AG04450 (cell line): ENCODE measurements at regions of chr10 and their contacts with region 1.

Region 1: GRCh38 chr10:21269289-21269688 is 256.2 kb downstream of the SKIDA1 start:
- DNase-seq: no peak
- H3K4me3 ChIP-seq: no peak overlapping the region
- H3K27ac ChIP-seq: no peak overlapping the region
- H3K27me3 ChIP-seq: no peaks in the 10 kb centered on the region
- CTCF ChIP-seq: no peak

Region 2: DNA sequence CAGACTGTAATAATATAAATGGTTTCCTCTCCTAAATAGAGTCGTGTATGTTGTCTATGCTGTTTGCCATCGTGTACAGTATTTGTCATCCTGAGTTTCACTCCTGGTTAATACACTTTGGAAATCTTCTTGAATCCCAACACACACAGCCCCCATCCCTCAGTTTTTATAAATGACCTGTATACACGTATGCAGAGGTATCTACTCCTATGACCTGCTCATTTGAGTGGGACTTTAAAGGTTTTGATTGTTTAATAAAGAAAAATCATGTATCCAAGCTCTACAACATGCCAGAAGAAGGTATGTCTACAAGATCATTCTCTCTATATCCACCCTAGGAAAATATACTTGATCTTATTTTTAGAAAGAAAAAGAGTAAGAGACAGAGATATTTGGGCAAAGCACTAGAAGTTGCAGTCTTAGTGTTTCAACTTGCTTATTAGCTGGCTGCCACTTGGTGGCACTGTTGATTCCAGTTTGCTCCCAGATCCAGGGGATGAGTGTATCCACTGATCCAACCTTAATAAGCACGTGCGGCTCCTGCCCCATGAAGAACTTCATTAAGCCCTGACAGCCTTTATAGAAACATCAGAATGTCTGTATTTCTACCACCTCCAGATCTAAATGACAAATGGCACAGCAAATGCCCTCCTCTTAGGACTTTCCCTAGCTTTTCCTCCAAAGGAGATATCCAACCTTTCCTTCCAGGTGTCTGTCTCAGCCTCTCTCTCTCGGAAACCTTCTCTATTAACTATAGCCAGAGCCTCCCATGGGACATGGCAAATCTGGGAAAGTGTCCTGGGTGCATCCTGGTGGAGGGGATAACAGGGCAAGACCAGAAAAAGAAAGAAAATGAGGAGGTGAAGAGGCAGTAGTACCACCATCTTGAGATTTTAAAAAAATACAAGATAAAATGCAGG is 190.6 kb before region 1 on chr10:
- CTCF ChIA-PET with region 1: interaction called, 38 read pairs
- POLR2A ChIA-PET with region 1: no interaction called
- DNase-seq: peak; percentile 15
- H3K4me3 ChIP-seq: no peak overlapping the region
- H3K27ac ChIP-seq: no peak overlapping the region
- H3K27me3 ChIP-seq: no peaks in the 10 kb centered on the region
- CTCF ChIP-seq: peak; percentile 87

Region 3: GRCh38 chr10:21238717-21239116 is 30.6 kb before region 1 on chr10:
- CTCF ChIA-PET with region 1: interaction called, 10 read pairs
- POLR2A ChIA-PET with region 1: no interaction called
- DNase-seq: no peak
- H3K4me3 ChIP-seq: no peak overlapping the region
- H3K27ac ChIP-seq: no peak overlapping the region
- H3K27me3 ChIP-seq: no peaks in the 10 kb centered on the region
- CTCF ChIP-seq: no peak

Region 4: DNA sequence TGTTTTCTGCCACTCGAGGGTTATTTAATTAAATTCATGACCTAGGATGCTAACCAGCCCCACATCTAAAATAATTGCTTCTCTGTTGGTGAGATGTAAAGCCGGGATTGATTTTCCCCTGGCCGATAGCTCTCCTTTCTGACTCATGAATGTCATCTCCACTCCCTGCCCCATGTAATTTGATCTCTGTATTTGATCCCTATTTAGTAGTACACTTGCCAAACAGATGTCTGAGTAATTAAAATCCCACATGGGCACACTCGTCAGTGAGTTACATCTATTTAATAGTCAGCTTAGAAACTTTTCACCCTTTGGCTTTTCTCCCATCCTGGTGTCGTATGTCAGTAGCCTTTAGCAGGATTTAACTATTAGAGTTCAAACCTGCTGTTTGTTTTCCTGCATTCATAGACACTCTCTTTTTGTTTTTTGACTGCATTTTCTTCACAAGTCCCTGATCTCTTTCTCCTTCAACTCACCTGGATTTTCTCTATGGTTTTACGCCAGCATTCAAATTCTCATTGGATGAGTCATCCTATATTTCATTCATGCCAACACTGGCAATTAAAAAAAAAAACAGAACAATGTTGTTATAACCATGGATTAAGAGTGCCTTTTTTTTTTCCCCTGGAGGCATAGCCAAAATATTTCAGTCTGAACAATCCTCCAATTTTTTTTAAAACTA is 1158.7 kb after region 1 on chr10:
- CTCF ChIA-PET with region 1: no interaction called
- POLR2A ChIA-PET with region 1: no interaction called
- DNase-seq: peak; percentile 58
- H3K4me3 ChIP-seq: no peak overlapping the region
- H3K27ac ChIP-seq: no peak overlapping the region
- H3K27me3 ChIP-seq: no peaks in the 10 kb centered on the region
- CTCF ChIP-seq: no peak